Activated naive CD4-positive, alpha-beta T cell treated with anti-CD3 and anti-CD28 coated beads for 36 hours (primary cell): ENCODE measurements at regions of chr12 and their contacts with region 1.

Region 1: GRCh38 chr12:55738123-55739024 is 4.5 kb upstream of the GDF11 start:
- DNase-seq: peak; percentile 89
- H3K4me3 Mint-ChIP-seq: peak overlapping the region; percentile 75
- H3K27ac Mint-ChIP-seq: peak overlapping the region; percentile 82
- H3K4me1 Mint-ChIP-seq: peaks cover 22% of the 10 kb centered on the region
- H3K27me3 Mint-ChIP-seq: no peaks in the 10 kb centered on the region

Region 2: DNA sequence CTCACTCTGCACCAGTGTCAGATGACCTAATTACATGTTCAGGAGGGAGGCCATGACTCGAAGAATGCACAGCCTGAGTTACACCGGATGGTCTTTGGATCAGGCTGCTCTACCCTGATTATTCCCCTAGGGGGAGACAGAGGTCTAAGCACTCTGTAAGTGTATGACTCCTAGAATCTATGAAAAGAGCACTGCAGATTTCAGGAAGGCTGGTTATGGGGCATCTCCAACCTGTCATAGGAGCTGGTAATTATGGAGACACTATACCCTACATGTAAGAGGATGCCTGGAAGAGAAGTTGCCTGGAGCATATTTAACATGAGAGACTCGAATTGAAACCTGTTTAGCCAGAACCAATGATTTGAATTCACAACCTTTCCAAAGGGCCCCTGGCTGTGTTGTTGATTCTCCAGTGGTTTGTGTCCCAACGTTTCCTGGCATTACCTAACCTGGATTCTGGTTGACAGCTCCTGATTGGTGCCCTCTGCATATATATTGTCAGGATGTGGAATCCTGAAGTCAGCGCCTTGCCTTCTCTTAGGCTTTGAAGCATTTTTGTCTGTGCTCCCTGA is 884.3 kb before region 1 on chr12 and contains the start of gene MUCL1:
- CTCF ChIA-PET with region 1: no interaction called
- intact Hi-C with region 1: no loop called
- DNase-seq: peak; percentile 89
- H3K4me3 Mint-ChIP-seq: no peak within 1 kb of the TSS
- H3K27ac Mint-ChIP-seq: no peak within 1 kb of the TSS
- H3K4me1 Mint-ChIP-seq: peaks cover 16% of the 10 kb centered on the region
- H3K27me3 Mint-ChIP-seq: no peaks in the 10 kb centered on the region
- total RNA-seq, gene MUCL1: not detected

Region 3: GRCh38 chr12:55681142-55682077 is 57.0 kb before region 1 on chr12:
- CTCF ChIA-PET with region 1: no interaction called
- intact Hi-C with region 1: loop called (anchors 1 kb)
- DNase-seq: no peak
- H3K4me3 Mint-ChIP-seq: no peak overlapping the region
- H3K27ac Mint-ChIP-seq: no peak overlapping the region
- H3K4me1 Mint-ChIP-seq: peaks cover 6% of the 10 kb centered on the region
- H3K27me3 Mint-ChIP-seq: peaks cover 16% of the 10 kb centered on the region

Region 4: DNA sequence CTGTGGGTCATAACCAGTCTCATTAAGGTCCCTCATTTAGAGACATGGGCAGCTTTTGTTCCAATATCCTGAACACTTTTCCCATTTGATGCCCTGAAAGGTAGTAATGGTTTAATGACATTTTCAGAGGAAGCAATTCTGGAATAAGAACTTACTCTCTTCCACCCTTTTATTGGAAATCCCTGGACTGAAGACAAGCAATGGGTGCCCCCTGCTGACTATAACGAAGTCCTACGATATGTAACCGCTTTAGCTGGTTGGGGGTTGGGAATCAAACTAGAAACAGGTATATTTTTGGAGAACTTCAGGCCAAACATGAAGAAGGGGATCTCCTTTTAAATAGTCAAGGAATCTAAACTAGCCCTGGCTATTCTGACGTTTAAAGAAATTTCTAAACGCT is 58.7 kb after region 1 on chr12:
- CTCF ChIA-PET with region 1: interaction called, 36 read pairs
- intact Hi-C with region 1: loop called (anchors 1 kb)
- DNase-seq: no peak
- H3K4me3 Mint-ChIP-seq: no peak overlapping the region
- H3K27ac Mint-ChIP-seq: no peak overlapping the region
- H3K4me1 Mint-ChIP-seq: peaks cover 3% of the 10 kb centered on the region
- H3K27me3 Mint-ChIP-seq: no peaks in the 10 kb centered on the region

Region 5: DNA sequence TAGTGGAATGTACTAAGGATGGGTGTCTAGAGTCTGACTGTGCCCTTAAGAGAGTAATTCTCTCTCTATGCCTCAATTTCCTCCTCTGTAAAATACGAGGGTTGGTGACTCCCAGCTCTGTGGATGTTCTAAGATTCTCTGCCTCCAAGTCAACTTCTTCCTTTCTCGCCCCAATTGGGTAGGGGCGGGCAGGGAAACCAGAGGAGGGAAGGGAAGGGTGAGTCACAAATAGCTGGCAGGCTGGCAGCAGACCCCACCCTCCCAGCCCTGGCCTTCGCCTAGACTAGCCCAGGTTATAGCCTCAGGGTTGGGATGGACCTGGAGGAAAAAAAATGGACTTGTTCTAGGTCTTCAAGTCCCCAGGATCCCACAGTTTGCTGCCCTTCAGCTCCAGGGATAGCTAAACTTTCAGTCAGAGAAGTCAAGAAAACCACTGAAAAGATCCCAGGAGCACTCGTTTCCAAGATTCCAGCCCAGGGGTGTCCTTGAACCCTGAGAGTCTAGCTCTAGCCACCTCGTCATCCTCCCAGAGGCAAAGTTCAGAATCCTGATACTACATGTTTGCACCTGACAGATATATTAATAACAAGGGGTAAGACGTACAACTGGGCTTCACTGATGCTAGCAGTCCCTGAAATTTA is 194.9 kb after region 1 on chr12:
- CTCF ChIA-PET with region 1: interaction called, 35 read pairs
- intact Hi-C with region 1: no loop called
- DNase-seq: peak; percentile 65
- H3K4me3 Mint-ChIP-seq: peak overlapping the region; percentile 99
- H3K27ac Mint-ChIP-seq: peak overlapping the region; percentile 100
- H3K4me1 Mint-ChIP-seq: peaks cover 68% of the 10 kb centered on the region
- H3K27me3 Mint-ChIP-seq: no peaks in the 10 kb centered on the region

Region 6: DNA sequence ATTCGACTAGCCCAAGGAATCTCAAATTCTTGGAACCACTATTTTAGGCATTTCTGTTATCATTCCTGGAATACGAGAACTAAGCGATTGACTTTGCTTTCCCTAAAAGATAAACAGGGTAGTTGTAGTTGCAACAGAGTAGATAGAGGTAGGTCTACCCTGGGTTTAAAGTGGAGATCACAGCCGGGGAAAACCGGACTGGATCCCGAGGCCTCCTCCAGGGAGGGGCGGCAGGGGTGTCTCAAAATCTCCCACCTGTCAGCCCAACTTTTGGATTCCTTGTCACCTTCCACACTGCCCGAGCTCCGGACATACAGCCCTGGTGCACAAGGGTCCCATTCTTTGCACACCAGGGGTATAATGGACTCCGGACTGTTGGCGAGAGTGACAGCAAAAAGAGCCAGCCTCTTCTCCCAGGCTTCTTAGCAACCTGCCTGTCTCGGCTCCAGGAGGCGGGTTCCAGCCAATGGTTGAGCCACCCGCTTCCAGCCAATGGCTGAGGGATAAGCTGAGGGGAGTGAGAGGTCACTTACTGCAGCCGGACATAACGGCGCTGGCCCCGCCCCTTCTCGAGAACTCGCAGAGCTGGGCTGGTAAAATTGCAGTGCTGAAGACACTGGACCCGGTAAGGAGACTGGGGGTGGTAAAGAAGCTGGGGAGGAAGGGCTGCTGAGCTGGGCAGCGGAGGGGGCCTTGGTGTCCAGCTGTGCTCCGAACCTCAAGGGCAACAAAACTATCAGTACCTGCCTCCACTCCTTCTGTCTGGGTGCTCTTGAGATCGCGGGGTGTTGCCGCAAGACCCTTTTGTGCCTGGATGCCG is 258.6 kb after region 1 on chr12 and contains the start of gene SUOX:
- CTCF ChIA-PET with region 1: interaction called, 12 read pairs
- intact Hi-C with region 1: no loop called
- DNase-seq: peak; percentile 72
- H3K4me3 Mint-ChIP-seq: peak within 1 kb of the TSS; percentile 72
- H3K27ac Mint-ChIP-seq: peak within 1 kb of the TSS; percentile 36
- H3K4me1 Mint-ChIP-seq: peaks cover 20% of the 10 kb centered on the region
- H3K27me3 Mint-ChIP-seq: peaks cover 18% of the 10 kb centered on the region
- total RNA-seq, gene SUOX: 1.7 to 2.2 TPM

Region 7: GRCh38 chr12:56104109-56104814 is 365.9 kb after region 1 on chr12 and contains the start of gene PA2G4:
- CTCF ChIA-PET with region 1: interaction called, 5 read pairs
- intact Hi-C with region 1: loop called (anchors 1 kb)
- DNase-seq: peak; percentile 99
- H3K4me3 Mint-ChIP-seq: peak within 1 kb of the TSS; percentile 99
- H3K27ac Mint-ChIP-seq: peak within 1 kb of the TSS; percentile 99
- H3K4me1 Mint-ChIP-seq: peaks cover 38% of the 10 kb centered on the region
- H3K27me3 Mint-ChIP-seq: no peaks in the 10 kb centered on the region
- total RNA-seq, gene PA2G4: 398 to 411 TPM

Region 8: GRCh38 chr12:56468216-56469006 is 730.0 kb after region 1 on chr12 and contains the start of gene SPRYD4:
- CTCF ChIA-PET with region 1: no interaction called
- intact Hi-C with region 1: loop called (anchors 10 kb)
- DNase-seq: peak; percentile 95
- H3K4me3 Mint-ChIP-seq: peak within 1 kb of the TSS; percentile 96
- H3K27ac Mint-ChIP-seq: peak within 1 kb of the TSS; percentile 97
- H3K4me1 Mint-ChIP-seq: peaks cover 32% of the 10 kb centered on the region
- H3K27me3 Mint-ChIP-seq: no peaks in the 10 kb centered on the region
- total RNA-seq, gene SPRYD4: 2.2 TPM